ENCODE measurements at regions of chr22 and their contacts with region 1.

Region 1: GRCh38 chr22:24555157-24556039 is at the start of gene SNRPD3:
- DNase-seq: peak; percentile 99 to 100 (median 100)
- ATAC-seq: peak; percentile 83
- H3K4me3 ChIP-seq: peak within 1 kb of the TSS; percentile 78
- H3K4me3 Mint-ChIP-seq: peak within 1 kb of the TSS; percentile 97
- H3K27ac ChIP-seq: peak within 1 kb of the TSS; percentile 97 to 98
- H3K27ac Mint-ChIP-seq: peak within 1 kb of the TSS; percentile 89
- H3K4me1 ChIP-seq: peaks cover 52% of the 10 kb centered on the region
- H3K4me1 Mint-ChIP-seq: peaks cover 82% of the 10 kb centered on the region
- H3K27me3 ChIP-seq: no peaks in the 10 kb centered on the region
- H3K27me3 Mint-ChIP-seq: no peaks in the 10 kb centered on the region
- CTCF ChIP-seq: no peak
- total RNA-seq, gene SNRPD3: 31.0 to 31.5 TPM

Region 2: GRCh38 chr22:23144932-23145873 is 1410.2 kb before region 1 on chr22 and contains the start of gene RAB36:
- CTCF ChIA-PET with region 1: no interaction called
- POLR2A ChIA-PET with region 1: no interaction called
- intact Hi-C with region 1: loop called in 1 of 2 experiments (anchors 10 kb)
- DNase-seq: peak; percentile 70 to 99 (median 90)
- ATAC-seq: peak; percentile 52
- H3K4me3 ChIP-seq: peak within 1 kb of the TSS; percentile 50
- H3K4me3 Mint-ChIP-seq: peak within 1 kb of the TSS; percentile 89
- H3K27ac ChIP-seq: peak within 1 kb of the TSS; percentile 54 to 78
- H3K27ac Mint-ChIP-seq: peak within 1 kb of the TSS; percentile 94
- H3K4me1 ChIP-seq: peaks cover 57% of the 10 kb centered on the region
- H3K4me1 Mint-ChIP-seq: peaks cover 50% of the 10 kb centered on the region
- H3K27me3 ChIP-seq: no peaks in the 10 kb centered on the region
- H3K27me3 Mint-ChIP-seq: no peaks in the 10 kb centered on the region
- CTCF ChIP-seq: no peak
- total RNA-seq, gene RAB36: 0.77 to 0.87 TPM

Region 3: GRCh38 chr22:23838681-23839468 is 716.5 kb before region 1 on chr22 and contains the start of gene DERL3:
- CTCF ChIA-PET with region 1: no interaction called
- POLR2A ChIA-PET with region 1: no interaction called
- intact Hi-C with region 1: loop called in 1 of 2 experiments (anchors 5 kb)
- DNase-seq: peak; percentile 86 to 98 (median 94)
- ATAC-seq: peak; percentile 94
- H3K4me3 ChIP-seq: peak within 1 kb of the TSS; percentile 80
- H3K4me3 Mint-ChIP-seq: peak within 1 kb of the TSS; percentile 91
- H3K27ac ChIP-seq: no peak within 1 kb of the TSS
- H3K27ac Mint-ChIP-seq: peak within 1 kb of the TSS; percentile 52
- H3K4me1 ChIP-seq: peaks cover 25% of the 10 kb centered on the region
- H3K4me1 Mint-ChIP-seq: peaks cover 19% of the 10 kb centered on the region
- H3K27me3 ChIP-seq: no peaks in the 10 kb centered on the region
- H3K27me3 Mint-ChIP-seq: no peaks in the 10 kb centered on the region
- CTCF ChIP-seq: no peak
- total RNA-seq, gene DERL3: 0.66 to 0.98 TPM

Region 4: DNA sequence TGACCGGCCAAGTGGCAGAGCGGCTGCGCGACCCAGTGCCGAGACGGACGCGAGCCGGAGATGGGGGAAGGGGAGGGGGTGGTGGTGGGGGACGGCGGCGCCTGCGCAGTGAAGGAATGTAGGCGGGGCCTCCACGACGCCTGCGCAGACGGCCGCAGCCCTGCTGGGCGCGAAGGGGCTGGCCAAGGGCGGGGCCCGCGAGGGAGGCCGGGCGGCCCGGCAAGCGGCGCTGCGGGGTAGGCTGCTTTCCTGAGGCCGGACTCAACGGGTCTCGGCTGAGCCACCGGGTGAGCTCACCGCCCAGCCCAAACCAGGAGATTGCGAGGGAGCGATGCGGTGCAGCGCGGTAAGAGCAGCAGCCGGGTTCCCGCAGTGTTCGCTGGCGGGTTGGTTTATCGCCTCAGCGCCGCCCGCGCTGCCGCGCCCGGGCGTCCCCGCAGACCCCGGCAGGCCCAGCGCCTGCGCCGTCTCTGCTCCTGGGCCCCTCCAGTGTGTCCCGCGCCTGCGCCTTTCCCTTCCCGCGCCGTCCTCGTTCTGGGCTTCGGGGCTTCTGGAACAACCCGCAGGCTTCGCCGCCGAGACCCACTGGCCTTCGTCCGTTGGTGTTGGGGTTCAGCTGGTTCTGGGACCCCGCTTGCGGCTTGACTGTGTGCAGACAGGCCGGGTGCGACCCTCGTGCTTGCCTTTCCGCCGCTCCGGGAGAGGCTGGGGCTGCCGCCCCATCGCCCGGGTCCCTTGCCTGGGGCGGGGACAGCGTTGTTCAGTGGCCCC is 284.6 kb before region 1 on chr22 and contains the start of gene SPECC1L:
- CTCF ChIA-PET with region 1: no interaction called
- POLR2A ChIA-PET with region 1: no interaction called
- intact Hi-C with region 1: loop called in 1 of 2 experiments (anchors 1 kb)
- DNase-seq: peak; percentile 81 to 97 (median 90)
- ATAC-seq: peak; percentile 91
- H3K4me3 ChIP-seq: peak within 1 kb of the TSS; percentile 93
- H3K4me3 Mint-ChIP-seq: peak within 1 kb of the TSS; percentile 96
- H3K27ac ChIP-seq: peak within 1 kb of the TSS; percentile 62 to 79
- H3K27ac Mint-ChIP-seq: peak within 1 kb of the TSS; percentile 67
- H3K4me1 ChIP-seq: peaks cover 21% of the 10 kb centered on the region
- H3K4me1 Mint-ChIP-seq: peaks cover 40% of the 10 kb centered on the region
- H3K27me3 ChIP-seq: no peaks in the 10 kb centered on the region
- H3K27me3 Mint-ChIP-seq: no peaks in the 10 kb centered on the region
- CTCF ChIP-seq: no peak
- total RNA-seq, gene SPECC1L: 27.5 to 31.8 TPM

Region 5: DNA sequence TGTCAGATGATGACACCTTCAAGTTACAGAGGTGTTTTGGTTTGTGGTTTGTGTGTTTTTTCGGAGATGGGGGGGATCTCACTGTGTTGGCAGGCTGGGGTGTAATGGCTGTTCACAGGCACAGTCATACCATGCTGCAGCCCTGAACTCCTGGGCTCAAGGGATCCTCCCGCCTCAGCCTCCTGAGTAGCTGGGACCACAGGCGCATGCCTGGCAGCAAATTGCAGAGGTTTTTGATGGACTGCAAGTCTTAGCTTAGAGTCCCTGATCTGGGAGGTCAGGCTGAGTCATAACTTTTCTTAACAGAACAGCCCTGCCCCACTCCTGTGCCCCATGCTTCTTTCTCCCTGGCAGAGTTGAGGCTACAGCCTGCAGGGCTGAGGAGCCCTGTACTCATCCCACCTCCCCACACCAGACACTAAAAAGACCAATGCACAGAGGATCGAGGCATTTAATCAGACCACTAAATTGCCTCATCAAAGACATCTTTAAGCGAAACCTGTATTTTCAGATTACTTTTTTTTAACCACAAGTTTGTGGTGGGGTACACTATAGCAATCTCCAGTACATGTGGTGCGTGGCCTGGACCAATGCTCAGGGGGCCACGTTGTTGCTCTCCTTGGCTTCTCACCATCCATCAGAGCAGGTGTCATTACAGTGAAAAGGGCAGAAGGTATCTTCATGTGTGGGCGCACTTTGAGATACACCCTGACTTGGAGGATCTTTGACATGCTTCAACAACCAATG is 145.1 kb before region 1 on chr22:
- CTCF ChIA-PET with region 1: no interaction called
- POLR2A ChIA-PET with region 1: no interaction called
- intact Hi-C with region 1: no loop called
- DNase-seq: peak in 2 of 14 experiments; percentile 23 to 52
- ATAC-seq: no peak
- H3K4me3 ChIP-seq: no peak overlapping the region
- H3K4me3 Mint-ChIP-seq: no peak overlapping the region
- H3K27ac ChIP-seq: no peak overlapping the region
- H3K27ac Mint-ChIP-seq: peak overlapping the region; percentile 53
- H3K4me1 ChIP-seq: peaks cover 23% of the 10 kb centered on the region
- H3K4me1 Mint-ChIP-seq: peaks cover 24% of the 10 kb centered on the region
- H3K27me3 ChIP-seq: no peaks in the 10 kb centered on the region
- H3K27me3 Mint-ChIP-seq: no peaks in the 10 kb centered on the region
- CTCF ChIP-seq: no peak

Region 6: GRCh38 chr22:24482575-24482974 is 72.8 kb before region 1 on chr22:
- CTCF ChIA-PET with region 1: no interaction called
- POLR2A ChIA-PET with region 1: no interaction called
- intact Hi-C with region 1: no loop called
- DNase-seq: peak in 2 of 14 experiments; percentile 27 to 42
- ATAC-seq: no peak
- H3K4me3 ChIP-seq: no peak overlapping the region
- H3K4me3 Mint-ChIP-seq: no peak overlapping the region
- H3K27ac ChIP-seq: no peak overlapping the region
- H3K27ac Mint-ChIP-seq: no peak overlapping the region
- H3K4me1 ChIP-seq: no peaks in the 10 kb centered on the region
- H3K4me1 Mint-ChIP-seq: no peaks in the 10 kb centered on the region
- H3K27me3 ChIP-seq: no peaks in the 10 kb centered on the region
- H3K27me3 Mint-ChIP-seq: no peaks in the 10 kb centered on the region
- CTCF ChIP-seq: no peak

Region 7: DNA sequence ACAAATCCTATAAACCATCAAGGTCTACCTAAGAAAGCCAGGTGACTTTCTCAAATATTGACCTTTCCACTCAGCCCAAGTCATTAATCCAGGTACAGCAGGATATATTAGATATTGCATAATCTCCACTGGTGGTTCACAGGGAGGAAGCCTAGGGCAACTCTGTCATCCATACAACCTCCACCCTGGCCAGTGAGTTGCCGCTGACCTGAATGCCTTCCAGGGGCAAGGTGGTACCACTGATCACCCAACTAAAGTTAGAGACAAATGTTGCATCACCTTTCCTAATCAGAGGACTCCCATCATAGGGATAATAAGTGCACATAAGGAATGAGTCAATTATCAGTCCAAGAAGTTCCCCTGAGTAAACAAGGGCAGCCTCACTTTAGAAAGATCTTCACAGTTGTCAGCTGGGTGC is 23.3 kb before region 1 on chr22:
- CTCF ChIA-PET with region 1: no interaction called
- POLR2A ChIA-PET with region 1: no interaction called
- intact Hi-C with region 1: no loop called
- DNase-seq: no peak
- ATAC-seq: no peak
- H3K4me3 ChIP-seq: no peak overlapping the region
- H3K4me3 Mint-ChIP-seq: no peak overlapping the region
- H3K27ac ChIP-seq: no peak overlapping the region
- H3K27ac Mint-ChIP-seq: no peak overlapping the region
- H3K4me1 ChIP-seq: no peaks in the 10 kb centered on the region
- H3K4me1 Mint-ChIP-seq: no peaks in the 10 kb centered on the region
- H3K27me3 ChIP-seq: no peaks in the 10 kb centered on the region
- H3K27me3 Mint-ChIP-seq: no peaks in the 10 kb centered on the region
- CTCF ChIP-seq: no peak

Region 8: GRCh38 chr22:24576778-24577177 is 21.4 kb after region 1 on chr22:
- CTCF ChIA-PET with region 1: no interaction called
- POLR2A ChIA-PET with region 1: no interaction called
- intact Hi-C with region 1: no loop called
- DNase-seq: no peak
- ATAC-seq: no peak
- H3K4me3 ChIP-seq: no peak overlapping the region
- H3K4me3 Mint-ChIP-seq: no peak overlapping the region
- H3K27ac ChIP-seq: no peak overlapping the region
- H3K27ac Mint-ChIP-seq: no peak overlapping the region
- H3K4me1 ChIP-seq: no peaks in the 10 kb centered on the region
- H3K4me1 Mint-ChIP-seq: no peaks in the 10 kb centered on the region
- H3K27me3 ChIP-seq: no peaks in the 10 kb centered on the region
- H3K27me3 Mint-ChIP-seq: no peaks in the 10 kb centered on the region
- CTCF ChIP-seq: no peak

Region 9: DNA sequence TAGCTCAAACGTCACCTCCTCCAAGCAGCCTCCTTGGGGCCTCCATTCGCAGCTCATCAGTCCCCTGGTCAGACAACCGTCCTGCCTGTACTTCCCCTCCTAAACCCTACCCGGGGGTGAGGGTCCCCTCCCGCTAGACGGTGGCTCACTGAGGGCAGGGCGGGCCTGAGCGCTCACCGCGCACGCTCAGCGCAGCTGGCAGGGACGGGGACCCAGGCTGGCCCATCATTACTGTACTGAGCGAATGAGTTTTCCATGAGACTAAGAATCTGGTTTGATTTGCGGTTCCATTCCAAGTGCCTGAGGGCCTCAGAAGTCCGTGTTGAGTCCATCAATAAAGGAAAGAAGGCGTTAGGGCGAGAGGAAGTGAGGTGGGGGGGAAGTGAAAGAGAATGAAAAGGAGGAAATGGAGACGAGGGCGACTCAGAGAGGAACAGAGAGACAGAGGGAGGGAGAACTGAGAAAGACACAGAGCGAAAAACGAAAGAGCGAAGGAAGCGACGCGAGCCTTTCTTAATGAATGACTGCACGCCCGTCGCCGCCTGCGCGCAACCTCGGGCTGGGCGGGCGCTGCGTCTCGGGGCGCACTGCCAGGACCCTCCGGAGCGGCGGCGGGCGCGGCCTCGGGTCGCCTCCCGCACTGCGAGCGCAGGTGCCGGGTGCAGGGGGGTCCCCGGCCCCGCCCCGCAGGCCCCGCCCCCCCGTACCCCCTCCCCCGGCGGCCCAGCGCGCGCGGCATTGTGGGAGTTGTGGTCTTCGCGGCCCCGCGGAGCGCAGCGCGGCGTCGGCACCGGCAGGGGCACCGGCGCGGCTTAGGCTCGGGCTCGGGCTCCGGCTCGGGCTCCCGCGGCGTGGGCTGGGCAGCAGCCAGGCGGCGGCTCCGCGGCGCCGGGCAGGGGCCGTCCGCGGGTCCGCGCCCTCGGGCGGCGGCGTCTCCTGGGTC is 1873.4 kb after region 1 on chr22 and contains the start of gene ASPHD2:
- CTCF ChIA-PET with region 1: no interaction called
- POLR2A ChIA-PET with region 1: no interaction called
- intact Hi-C with region 1: loop called in 1 of 2 experiments (anchors 5 kb)
- DNase-seq: peak; percentile 61 to 92 (median 77)
- ATAC-seq: peak; percentile 85
- H3K4me3 ChIP-seq: peak within 1 kb of the TSS; percentile 87
- H3K4me3 Mint-ChIP-seq: peak within 1 kb of the TSS; percentile 98
- H3K27ac ChIP-seq: peak within 1 kb of the TSS; percentile 96 to 97
- H3K27ac Mint-ChIP-seq: peak within 1 kb of the TSS; percentile 94
- H3K4me1 ChIP-seq: peaks cover 30% of the 10 kb centered on the region
- H3K4me1 Mint-ChIP-seq: peaks cover 31% of the 10 kb centered on the region
- H3K27me3 ChIP-seq: no peaks in the 10 kb centered on the region
- H3K27me3 Mint-ChIP-seq: no peaks in the 10 kb centered on the region
- CTCF ChIP-seq: no peak
- total RNA-seq, gene ASPHD2: 0.70 to 0.85 TPM

Measured in CD4-positive, alpha-beta T cell (primary cell).